Lower leg skin (tissue), 4 donors: ENCODE measurements at regions of chr10 and their contacts with region 1.

Region 1: GRCh38 chr10:74384615-74385183 is 233.7 kb downstream of the ADK start:
- DNase-seq: no peak
- H3K4me3 ChIP-seq: no peak overlapping the region
- CTCF ChIP-seq: no peak
- POLR2A ChIP-seq: no peak

Region 2: GRCh38 chr10:73837072-73837471 is 547.6 kb before region 1 on chr10:
- intact Hi-C with region 1: loop called (anchors 10 kb)
- DNase-seq: no peak
- H3K4me3 ChIP-seq: no peak overlapping the region
- CTCF ChIP-seq: no peak
- POLR2A ChIP-seq: no peak